Lower leg skin (tissue), 4 donors: ENCODE measurements at regions of chr15 and their contacts with region 1.

Region 1: GRCh38 chr15:32659340-32660155 is 18.0 kb downstream of the SCG5 start:
- DNase-seq: peak in 1 of 2 donors; percentile 72
- H3K4me3 ChIP-seq: no peak overlapping the region
- CTCF ChIP-seq: no peak
- POLR2A ChIP-seq: no peak

Region 2: DNA sequence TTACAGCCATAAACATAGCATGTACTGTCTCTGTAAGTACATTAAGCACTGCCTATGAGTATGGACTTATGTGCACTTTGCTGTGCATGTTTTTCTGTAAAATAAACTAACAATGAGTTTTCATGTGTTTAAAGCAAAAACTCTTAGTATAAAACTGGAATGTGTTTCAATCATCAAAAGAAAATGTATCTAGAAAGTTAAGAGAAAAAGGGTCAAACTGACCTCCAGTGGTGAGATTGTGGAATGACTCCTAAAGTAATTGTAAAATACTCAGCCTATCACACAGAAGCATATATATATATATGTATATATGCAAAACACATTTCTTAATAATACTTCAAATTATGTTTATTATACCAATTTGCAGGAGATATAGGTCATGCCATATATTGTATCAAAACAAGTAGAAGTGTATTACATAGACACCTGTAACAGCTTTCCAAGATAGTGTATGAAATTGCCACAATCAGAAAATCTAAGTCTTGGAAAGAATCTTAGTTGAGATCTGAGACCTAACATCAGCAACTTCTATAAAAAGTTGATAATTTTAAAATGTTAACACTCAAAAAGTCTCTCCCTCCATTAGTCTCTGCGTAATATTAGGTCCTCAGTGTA is 335.4 kb after region 1 on chr15:
- intact Hi-C with region 1: loop called (anchors 5 kb)
- DNase-seq: no peak
- H3K4me3 ChIP-seq: no peak overlapping the region
- CTCF ChIP-seq: no peak
- POLR2A ChIP-seq: no peak

Region 3: DNA sequence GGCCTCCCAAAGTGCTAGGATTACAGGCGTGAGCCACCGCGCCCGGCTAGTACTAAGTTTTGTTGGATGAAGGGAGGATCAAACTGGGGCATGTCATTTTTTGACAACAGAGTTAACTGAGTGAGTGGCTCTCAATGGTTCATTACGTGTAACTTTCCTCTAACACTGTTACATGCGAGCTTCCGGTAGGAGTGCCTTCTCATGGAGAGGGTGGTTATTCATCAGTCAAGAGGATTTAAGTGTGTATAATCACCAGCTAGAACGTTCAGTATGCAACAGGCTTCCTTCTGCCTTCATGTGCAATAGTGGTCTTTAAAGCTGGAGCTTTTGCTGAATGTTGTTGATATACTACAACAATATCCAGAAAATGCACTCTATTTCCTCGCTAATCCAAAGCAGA is 1797.1 kb after region 1 on chr15:
- intact Hi-C with region 1: no loop called
- DNase-seq: no peak
- H3K4me3 ChIP-seq: no peak overlapping the region
- CTCF ChIP-seq: no peak
- POLR2A ChIP-seq: no peak